Activated CD4-positive, alpha-beta memory T cell treated with anti-CD3 and anti-CD28 coated beads, Interleukin-2, amount 10 ng/mL, durations not matched to agents 7 days and 5 days (primary cell): ENCODE measurements at regions of chr20 and their contacts with region 1.

Region 1: GRCh38 chr20:62900052-62900691 is 26.1 kb downstream of the DIDO1 start:
- DNase-seq: peak; percentile 78
- H3K4me3 Mint-ChIP-seq: no peak overlapping the region
- H3K27ac Mint-ChIP-seq: peak overlapping the region; percentile 76
- H3K4me1 Mint-ChIP-seq: peaks cover 44% of the 10 kb centered on the region
- H3K27me3 Mint-ChIP-seq: no peaks in the 10 kb centered on the region

Region 2: GRCh38 chr20:62776692-62777527 is 123.3 kb before region 1 on chr20:
- CTCF ChIA-PET with region 1: no interaction called
- POLR2A ChIA-PET with region 1: no interaction called
- DNase-seq: peak; percentile 82
- H3K4me3 Mint-ChIP-seq: peak overlapping the region; percentile 47
- H3K27ac Mint-ChIP-seq: peak overlapping the region; percentile 88
- H3K4me1 Mint-ChIP-seq: peaks cover 48% of the 10 kb centered on the region
- H3K27me3 Mint-ChIP-seq: peaks cover 4% of the 10 kb centered on the region

Region 3: DNA sequence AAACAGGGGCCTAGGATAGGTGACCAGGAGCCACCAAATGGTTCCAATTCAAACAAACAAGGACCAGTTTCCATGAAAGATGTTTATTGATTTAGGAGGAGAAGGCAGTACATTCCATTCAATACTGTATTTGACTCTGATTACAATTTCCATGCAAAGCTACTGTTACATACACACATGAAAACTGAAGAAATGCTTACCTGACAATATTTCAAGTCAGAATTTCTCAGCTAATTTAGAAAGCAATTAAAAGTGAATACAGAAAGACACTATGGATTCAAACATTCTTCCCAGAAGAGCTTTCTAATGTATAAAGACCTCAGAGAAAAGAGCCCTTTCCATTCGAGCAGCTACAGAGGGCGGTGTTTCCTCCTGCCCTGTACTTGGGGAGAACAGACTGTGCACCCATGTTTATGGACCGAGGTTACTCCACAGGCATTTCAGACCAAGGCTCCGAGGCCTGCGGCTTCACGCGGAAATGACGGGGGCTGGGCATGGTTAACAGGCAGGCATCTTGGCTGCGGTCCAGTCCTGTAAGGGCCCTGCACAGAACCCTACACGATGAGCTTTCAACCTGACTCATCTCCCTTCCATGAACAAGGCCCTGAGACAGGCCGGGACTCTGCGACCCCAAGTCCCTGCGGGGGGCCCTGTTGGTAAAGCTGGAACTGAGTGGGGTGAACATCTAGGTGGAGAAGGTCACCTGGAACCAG is 12.9 kb before region 1 on chr20:
- CTCF ChIA-PET with region 1: interaction called, 12 read pairs
- POLR2A ChIA-PET with region 1: interaction called, 13 read pairs
- DNase-seq: peak; percentile 42
- H3K4me3 Mint-ChIP-seq: no peak overlapping the region
- H3K27ac Mint-ChIP-seq: peak overlapping the region; percentile 47
- H3K4me1 Mint-ChIP-seq: peaks cover 26% of the 10 kb centered on the region
- H3K27me3 Mint-ChIP-seq: no peaks in the 10 kb centered on the region

Region 4: DNA sequence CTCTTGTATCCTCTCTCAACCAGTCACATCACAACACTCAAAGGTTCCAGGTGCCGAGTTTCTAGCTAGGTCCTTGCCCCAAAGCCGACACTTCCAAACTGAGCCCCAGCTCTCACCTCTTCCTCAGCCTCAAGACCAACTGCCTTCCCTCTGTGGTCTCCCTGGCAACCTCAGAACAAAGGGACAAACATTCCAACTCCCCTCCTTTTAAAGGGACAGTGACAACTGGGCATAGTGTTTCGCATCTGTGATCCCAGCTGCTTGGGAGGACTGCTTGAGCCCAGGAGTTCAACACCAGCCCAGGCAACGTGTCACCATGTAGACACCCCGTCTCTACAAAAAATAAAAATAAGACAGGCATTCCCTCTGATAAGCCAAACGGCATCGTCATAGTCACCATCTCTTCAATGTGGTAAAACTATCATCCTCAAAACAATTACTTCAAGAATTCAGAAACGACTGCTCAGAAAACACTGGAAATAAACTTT is 14.8 kb after region 1 on chr20:
- CTCF ChIA-PET with region 1: interaction called, 54 read pairs
- POLR2A ChIA-PET with region 1: interaction called, 88 read pairs
- DNase-seq: no peak
- H3K4me3 Mint-ChIP-seq: no peak overlapping the region
- H3K27ac Mint-ChIP-seq: peak overlapping the region; percentile 40
- H3K4me1 Mint-ChIP-seq: peaks cover 62% of the 10 kb centered on the region
- H3K27me3 Mint-ChIP-seq: no peaks in the 10 kb centered on the region

Region 5: GRCh38 chr20:62921119-62921687 is 21.0 kb after region 1 on chr20:
- CTCF ChIA-PET with region 1: interaction called, 54 read pairs
- POLR2A ChIA-PET with region 1: interaction called, 88 read pairs
- DNase-seq: peak; percentile 71
- H3K4me3 Mint-ChIP-seq: peak overlapping the region; percentile 58
- H3K27ac Mint-ChIP-seq: peak overlapping the region; percentile 81
- H3K4me1 Mint-ChIP-seq: peaks cover 83% of the 10 kb centered on the region
- H3K27me3 Mint-ChIP-seq: no peaks in the 10 kb centered on the region

Region 6: DNA sequence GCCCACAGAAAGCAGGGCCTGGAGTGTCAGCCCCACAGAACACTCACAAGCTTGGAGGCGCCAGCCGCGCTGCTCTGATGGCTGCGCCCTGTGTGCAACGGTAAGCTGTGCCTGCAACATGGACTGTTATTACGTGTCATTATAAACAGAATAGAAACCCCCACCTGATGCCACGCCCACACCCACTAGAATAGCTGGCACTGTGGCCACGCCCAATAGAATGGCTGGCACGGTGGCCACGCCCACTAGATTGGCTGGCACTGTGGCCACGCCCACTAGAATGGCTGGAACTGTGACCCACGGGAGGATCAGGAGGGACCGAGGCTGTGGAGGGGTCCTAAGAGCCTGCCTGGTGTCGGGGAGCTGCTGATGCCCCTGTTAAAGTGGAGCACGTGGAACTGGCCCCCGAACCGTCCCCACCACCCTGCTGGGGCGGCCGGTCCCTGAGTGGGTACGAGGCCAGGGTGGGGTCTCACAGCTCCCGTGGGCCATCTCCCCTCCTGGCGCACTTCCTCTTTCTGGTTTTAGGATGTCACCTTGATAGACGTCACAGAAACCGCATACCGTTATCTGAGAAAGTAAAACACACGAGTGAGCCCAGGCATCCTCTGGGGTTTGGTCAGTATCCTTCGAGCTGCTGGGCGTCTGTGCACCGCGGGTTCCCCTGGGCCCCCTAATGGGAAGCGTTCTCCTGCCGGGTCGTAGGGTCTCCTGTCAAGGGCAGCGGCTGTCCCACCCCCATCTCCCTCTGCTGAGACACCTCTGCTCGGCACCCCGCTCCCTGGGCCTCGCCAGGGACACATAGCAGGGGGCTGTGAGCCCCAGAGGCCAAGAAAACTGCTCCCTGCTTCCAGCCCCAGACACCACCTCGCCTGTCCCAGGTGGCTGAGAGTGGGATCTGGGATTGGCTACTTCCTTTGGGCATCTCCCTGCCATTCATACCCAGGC is 77.7 kb after region 1 on chr20:
- CTCF ChIA-PET with region 1: no interaction called
- POLR2A ChIA-PET with region 1: no interaction called
- DNase-seq: peak; percentile 85
- H3K4me3 Mint-ChIP-seq: peak overlapping the region; percentile 55
- H3K27ac Mint-ChIP-seq: peak overlapping the region; percentile 65
- H3K4me1 Mint-ChIP-seq: peaks cover 55% of the 10 kb centered on the region
- H3K27me3 Mint-ChIP-seq: peaks cover 66% of the 10 kb centered on the region